GM13976 (cell line): ENCODE measurements at regions of chr1 and their contacts with region 1.

Region 1: GRCh38 chr1:107529502-107530149 is 388.8 kb downstream of the NTNG1 start:
- DNase-seq: peak; percentile 62
- CTCF ChIP-seq: peak; percentile 65

Region 2: DNA sequence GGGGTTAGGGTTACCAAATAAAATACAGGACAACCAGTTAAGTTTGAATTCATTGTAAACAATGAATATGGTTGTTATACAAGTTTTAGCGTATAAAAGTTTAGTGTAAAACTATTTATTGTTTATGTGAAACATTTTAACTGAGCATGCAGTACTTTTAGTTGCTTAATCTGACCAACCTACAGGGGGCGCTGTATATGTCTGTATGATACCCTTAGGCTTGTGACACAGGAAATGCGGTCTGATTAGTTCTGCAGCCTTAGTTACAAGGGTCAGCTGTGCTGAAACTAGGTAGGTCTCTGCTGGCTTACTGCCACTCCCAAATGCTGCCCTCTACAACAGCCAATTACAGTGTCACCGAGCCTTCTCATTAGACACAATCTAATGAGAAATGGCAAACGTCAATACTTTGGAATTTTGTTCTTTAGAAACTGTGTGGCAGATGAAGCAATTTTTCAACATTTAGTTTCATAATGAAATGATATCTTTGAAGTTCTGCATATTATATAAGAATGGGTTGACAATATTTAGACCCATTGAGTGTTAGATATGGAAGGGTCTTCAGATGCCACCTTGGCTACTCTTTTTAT is 332.6 kb before region 1 on chr1:
- in situ Hi-C with region 1: loop called (anchors 25 kb)
- DNase-seq: no peak
- CTCF ChIP-seq: no peak

Region 3: GRCh38 chr1:107617456-107618320 is 88.1 kb after region 1 on chr1:
- in situ Hi-C with region 1: no loop called
- DNase-seq: no peak
- CTCF ChIP-seq: no peak

Region 4: GRCh38 chr1:107648071-107648470 is 118.4 kb after region 1 on chr1:
- in situ Hi-C with region 1: no loop called
- DNase-seq: no peak
- CTCF ChIP-seq: no peak

Region 5: GRCh38 chr1:107750358-107750959 is 220.8 kb after region 1 on chr1:
- in situ Hi-C with region 1: loop called (anchors 25 kb)
- DNase-seq: peak; percentile 15
- CTCF ChIP-seq: peak; percentile 40